ENCODE measurements at regions of chr4 and their contacts with region 1.

Region 1: DNA sequence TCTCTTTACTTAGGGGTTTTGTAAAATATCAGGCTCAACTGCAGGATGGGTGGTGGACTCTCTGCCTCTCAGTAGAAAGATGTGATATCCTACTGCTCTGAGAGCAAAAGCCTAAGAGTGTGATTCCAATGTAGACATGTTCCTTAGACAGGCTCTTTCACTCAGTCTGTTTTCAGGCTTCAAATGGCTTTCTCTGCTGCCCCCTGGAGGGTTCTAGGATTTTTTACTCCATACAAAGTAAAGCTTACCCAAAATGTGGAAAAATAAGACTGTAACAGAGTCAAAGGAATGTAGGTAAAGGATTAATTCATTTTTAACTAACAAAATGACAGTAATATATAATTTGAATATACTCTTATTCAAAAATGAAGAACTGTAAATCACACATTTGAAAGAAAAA is 32.1 kb downstream of the ZGRF1 start:
- DNase-seq: peak in 7 of 9 donors; percentile 14 to 44 (median 35)
- ATAC-seq: peak; percentile 73
- H3K4me3 ChIP-seq: no peak overlapping the region
- H3K4me3 Mint-ChIP-seq: no peak overlapping the region
- H3K27ac ChIP-seq: no peak overlapping the region
- H3K27ac Mint-ChIP-seq: no peak overlapping the region
- H3K4me1 ChIP-seq: no peaks in the 10 kb centered on the region
- H3K4me1 Mint-ChIP-seq: no peaks in the 10 kb centered on the region
- H3K27me3 ChIP-seq: no peaks in the 10 kb centered on the region
- H3K27me3 Mint-ChIP-seq: no peaks in the 10 kb centered on the region

Region 2: DNA sequence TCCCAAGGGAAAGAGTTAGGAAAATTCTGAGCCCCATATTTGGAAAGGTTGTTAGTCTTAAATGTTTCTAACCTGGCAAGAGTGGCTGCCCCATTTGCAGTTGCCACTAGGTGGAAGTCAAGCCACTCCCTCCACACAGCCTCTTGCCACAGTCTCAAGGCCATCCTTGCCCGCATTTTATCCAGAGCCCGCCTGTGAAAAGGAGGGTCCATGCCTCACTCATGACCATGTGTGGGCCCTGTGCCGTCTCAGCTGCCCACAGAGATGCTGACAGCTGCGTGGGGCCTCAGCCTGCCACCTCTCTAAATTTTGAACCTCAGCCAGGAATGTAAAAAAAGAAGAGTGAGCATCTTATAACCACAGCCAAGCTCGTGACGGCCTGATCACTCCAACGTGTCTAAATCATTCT is 660.8 kb before region 1 on chr4:
- CTCF ChIA-PET with region 1: no interaction called
- POLR2A ChIA-PET with region 1: no interaction called
- intact Hi-C with region 1: loop called in 1 of 2 experiments (anchors 5 kb)
- DNase-seq: no peak
- ATAC-seq: no peak
- H3K4me3 ChIP-seq: no peak overlapping the region
- H3K4me3 Mint-ChIP-seq: no peak overlapping the region
- H3K27ac ChIP-seq: no peak overlapping the region
- H3K27ac Mint-ChIP-seq: no peak overlapping the region
- H3K4me1 ChIP-seq: no peaks in the 10 kb centered on the region
- H3K4me1 Mint-ChIP-seq: no peaks in the 10 kb centered on the region
- H3K27me3 ChIP-seq: no peaks in the 10 kb centered on the region
- H3K27me3 Mint-ChIP-seq: peaks cover 0 to 2% (median 0%) of the 10 kb centered on the region in 5 donors

Region 3: DNA sequence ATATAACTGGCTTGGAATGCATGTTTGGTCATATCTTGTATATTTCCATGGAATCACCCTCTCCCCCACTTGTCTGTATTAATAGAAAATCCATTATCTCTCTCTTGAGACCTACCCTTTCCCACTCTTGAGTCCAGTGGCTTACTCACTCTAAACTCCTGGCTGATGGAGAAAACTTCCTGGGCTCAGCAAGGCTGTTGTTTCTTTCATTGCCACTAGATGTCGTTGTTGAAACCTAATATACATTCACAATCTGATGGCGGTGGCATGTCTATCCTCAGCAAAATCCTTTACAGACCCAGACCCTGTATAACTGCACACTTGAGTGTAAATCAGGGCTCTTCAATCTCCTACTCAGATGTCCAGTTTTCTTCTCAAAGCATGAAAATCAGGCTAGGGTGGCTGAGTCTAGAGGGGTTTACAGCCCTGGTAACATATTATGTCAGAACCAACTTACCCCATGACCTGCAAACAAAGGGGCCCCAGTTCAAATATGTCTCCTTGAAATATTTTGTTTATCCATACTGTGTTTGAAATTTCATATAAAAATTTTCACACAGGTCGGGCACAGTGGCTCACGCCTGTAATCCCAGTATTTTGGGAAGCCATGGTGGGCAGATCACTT is 529.3 kb before region 1 on chr4:
- CTCF ChIA-PET with region 1: no interaction called
- POLR2A ChIA-PET with region 1: no interaction called
- intact Hi-C with region 1: loop called (anchors 1 to 2 kb)
- DNase-seq: peak in 6 of 9 donors; percentile 2 to 43 (median 25)
- ATAC-seq: peak; percentile 77
- H3K4me3 ChIP-seq: no peak overlapping the region
- H3K4me3 Mint-ChIP-seq: no peak overlapping the region
- H3K27ac ChIP-seq: no peak overlapping the region
- H3K27ac Mint-ChIP-seq: no peak overlapping the region
- H3K4me1 ChIP-seq: no peaks in the 10 kb centered on the region
- H3K4me1 Mint-ChIP-seq: no peaks in the 10 kb centered on the region
- H3K27me3 ChIP-seq: no peaks in the 10 kb centered on the region
- H3K27me3 Mint-ChIP-seq: peaks cover 5 to 27% (median 10%) of the 10 kb centered on the region in 5 donors

Region 4: DNA sequence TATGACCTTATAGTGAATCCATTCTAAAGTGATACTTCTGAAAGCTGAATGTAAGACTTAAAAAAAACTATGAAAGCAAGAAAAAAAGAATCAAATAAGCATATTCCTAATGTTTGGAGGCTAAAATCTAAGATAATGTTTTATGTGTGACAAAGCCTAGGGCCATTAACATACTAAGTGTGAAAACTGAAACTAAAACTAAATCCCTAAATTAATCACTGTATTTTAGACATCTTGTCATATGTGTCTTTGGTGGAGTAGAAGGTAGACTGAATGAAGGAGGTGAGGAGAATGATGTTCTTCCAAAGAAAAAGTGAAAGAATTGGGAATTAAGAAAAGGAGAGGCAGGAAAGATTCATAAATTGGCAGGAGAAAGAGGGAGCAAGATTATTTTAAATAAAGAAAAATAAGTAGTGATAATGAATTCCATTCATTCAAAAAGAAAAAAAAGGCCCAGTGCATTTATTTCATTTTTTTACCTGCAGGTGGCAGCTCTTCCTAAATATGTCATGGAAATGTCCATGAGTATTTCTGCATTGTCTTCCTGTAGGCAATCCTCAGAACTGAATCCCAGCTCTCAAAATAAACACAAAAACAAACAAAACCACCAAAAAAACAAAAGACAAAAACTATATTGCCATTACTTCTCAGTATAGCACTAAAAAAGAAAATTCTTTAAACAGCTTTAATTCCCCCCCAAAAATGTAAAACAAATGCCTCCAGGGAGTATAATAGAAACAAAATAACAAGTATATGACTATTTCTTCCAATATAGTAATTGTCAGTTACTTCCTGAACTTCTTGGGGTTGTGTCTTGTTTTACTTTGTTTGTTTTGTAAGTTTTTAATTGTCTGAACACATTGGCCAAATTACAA is 390.0 kb before region 1 on chr4:
- CTCF ChIA-PET with region 1: no interaction called
- POLR2A ChIA-PET with region 1: no interaction called
- intact Hi-C with region 1: loop called in 1 of 2 experiments (anchors 1 kb)
- DNase-seq: peak in 3 of 9 donors; percentile 16 to 26 (median 20)
- ATAC-seq: no peak
- H3K4me3 ChIP-seq: no peak overlapping the region
- H3K4me3 Mint-ChIP-seq: no peak overlapping the region
- H3K27ac ChIP-seq: no peak overlapping the region
- H3K27ac Mint-ChIP-seq: peak overlapping the region in 2 of 9 donors; percentile 5 to 7
- H3K4me1 ChIP-seq: no peaks in the 10 kb centered on the region
- H3K4me1 Mint-ChIP-seq: peaks cover 0 to 9% (median 4%) of the 10 kb centered on the region in 7 donors
- H3K27me3 ChIP-seq: no peaks in the 10 kb centered on the region
- H3K27me3 Mint-ChIP-seq: peaks cover 0 to 6% (median 0%) of the 10 kb centered on the region in 5 donors

Region 5: GRCh38 chr4:112253382-112254000 is 351.1 kb before region 1 on chr4:
- CTCF ChIA-PET with region 1: no interaction called
- POLR2A ChIA-PET with region 1: no interaction called
- intact Hi-C with region 1: no loop called
- DNase-seq: no peak
- ATAC-seq: no peak
- H3K4me3 ChIP-seq: no peak overlapping the region
- H3K4me3 Mint-ChIP-seq: no peak overlapping the region
- H3K27ac ChIP-seq: no peak overlapping the region
- H3K27ac Mint-ChIP-seq: no peak overlapping the region
- H3K4me1 ChIP-seq: no peaks in the 10 kb centered on the region
- H3K4me1 Mint-ChIP-seq: peaks cover 0 to 8% (median 0%) of the 10 kb centered on the region in 7 donors
- H3K27me3 ChIP-seq: no peaks in the 10 kb centered on the region
- H3K27me3 Mint-ChIP-seq: no peaks in the 10 kb centered on the region

Region 6: GRCh38 chr4:112327965-112328733 is 276.4 kb before region 1 on chr4:
- CTCF ChIA-PET with region 1: no interaction called
- POLR2A ChIA-PET with region 1: no interaction called
- intact Hi-C with region 1: loop called (anchors 1 kb)
- DNase-seq: peak in 4 of 9 donors; percentile 21 to 27 (median 24)
- ATAC-seq: peak; percentile 60
- H3K4me3 ChIP-seq: no peak overlapping the region
- H3K4me3 Mint-ChIP-seq: no peak overlapping the region
- H3K27ac ChIP-seq: no peak overlapping the region
- H3K27ac Mint-ChIP-seq: no peak overlapping the region
- H3K4me1 ChIP-seq: no peaks in the 10 kb centered on the region
- H3K4me1 Mint-ChIP-seq: peaks cover 0 to 9% (median under 1%) of the 10 kb centered on the region in 7 donors
- H3K27me3 ChIP-seq: no peaks in the 10 kb centered on the region
- H3K27me3 Mint-ChIP-seq: no peaks in the 10 kb centered on the region

Measured in naive thymus-derived CD4-positive, alpha-beta T cell (primary cell).